ENCODE measurements at regions of chr14 and their contacts with region 1.

Region 1: DNA sequence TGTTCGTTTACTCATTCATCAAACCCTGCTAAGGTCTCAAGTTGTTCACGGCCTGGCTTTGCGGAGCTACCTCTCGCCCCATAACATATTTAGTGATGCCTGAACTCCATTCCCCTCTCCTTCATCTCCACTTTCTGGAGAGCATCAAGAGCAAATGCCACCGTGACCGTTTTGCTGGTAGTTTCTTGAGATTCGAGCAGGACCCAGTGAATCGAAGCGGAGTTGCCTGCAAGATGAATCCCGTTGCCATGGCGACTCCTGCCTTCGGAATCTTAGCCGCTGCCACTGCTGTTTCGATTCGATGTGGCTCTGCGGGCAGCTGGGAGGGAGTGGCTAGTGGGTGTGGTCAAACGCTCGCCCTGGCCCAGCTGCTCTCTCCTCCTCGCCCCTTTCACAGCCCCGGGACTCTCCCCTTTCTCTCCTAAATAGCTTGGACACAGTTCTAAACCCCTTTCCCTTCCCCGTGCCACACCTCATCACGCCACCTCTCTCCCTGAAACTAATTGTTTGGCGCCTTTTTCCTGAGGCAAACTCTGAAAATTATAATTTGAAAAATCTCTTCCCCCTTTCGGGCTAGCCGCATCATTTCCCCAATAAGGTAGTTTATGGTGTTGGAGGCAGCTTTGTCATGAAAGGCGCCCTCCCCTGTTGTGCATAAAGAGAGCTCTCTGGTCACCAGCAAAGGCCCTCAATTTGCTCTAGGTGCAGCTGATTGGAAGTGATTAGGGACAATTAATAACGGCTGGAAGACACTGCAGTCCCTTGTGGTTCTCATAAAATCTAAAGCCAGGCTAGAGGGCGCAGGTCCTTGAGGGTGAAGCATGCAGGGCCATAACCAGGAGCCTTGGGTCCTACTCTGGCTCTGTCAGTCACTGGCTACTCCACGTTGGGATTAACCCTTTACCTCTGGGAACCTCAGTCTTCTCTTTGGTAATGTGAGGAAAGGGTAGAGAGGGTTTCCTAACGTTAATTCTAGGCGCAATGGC is 1.6 kb downstream of the DAAM1 start:
- DNase-seq: peak; percentile 78 to 79
- H3K4me3 ChIP-seq: peak overlapping the region; percentile 90
- H3K27ac ChIP-seq: no peak overlapping the region
- H3K4me1 ChIP-seq: peaks cover 29% of the 10 kb centered on the region
- H3K27me3 ChIP-seq: no peaks in the 10 kb centered on the region
- CTCF ChIP-seq: no peak; the same call in 1 of the 2 replicates

Region 2: DNA sequence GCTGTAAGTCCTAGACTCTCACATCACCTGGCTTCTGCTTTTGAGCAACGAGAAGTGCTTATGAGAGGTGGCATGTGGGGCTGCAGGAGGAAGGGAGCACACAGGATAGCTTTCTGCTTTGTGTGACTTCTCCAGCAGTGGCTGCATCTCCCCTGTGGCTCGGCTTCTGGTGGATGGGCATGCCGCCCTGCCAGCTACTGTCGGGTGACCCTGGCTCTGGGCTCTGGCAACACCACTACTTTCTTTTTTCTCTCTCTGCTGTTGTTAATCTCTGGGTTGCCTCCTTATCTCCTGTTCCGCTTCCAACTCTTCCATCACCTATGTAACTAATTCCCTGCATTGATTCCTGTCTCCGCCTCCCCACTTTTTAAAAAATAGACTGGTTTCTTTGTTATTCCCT is 210.8 kb before region 1 on chr14:
- CTCF ChIA-PET with region 1: no interaction called
- POLR2A ChIA-PET with region 1: no interaction called
- intact Hi-C with region 1: no loop called
- DNase-seq: no peak
- H3K4me3 ChIP-seq: no peak overlapping the region
- H3K27ac ChIP-seq: no peak overlapping the region
- H3K4me1 ChIP-seq: no peaks in the 10 kb centered on the region
- H3K27me3 ChIP-seq: peaks cover 6% of the 10 kb centered on the region; the same call in 1 of the 2 replicates
- CTCF ChIP-seq: no peak

Region 3: GRCh38 chr14:59360923-59361794 is 171.1 kb after region 1 on chr14:
- CTCF ChIA-PET with region 1: no interaction called
- POLR2A ChIA-PET with region 1: no interaction called
- intact Hi-C with region 1: loop called (anchors 1 kb)
- DNase-seq: peak; percentile 88 to 99
- H3K4me3 ChIP-seq: peak overlapping the region; percentile 33; the same call in 1 of the 2 replicates
- H3K27ac ChIP-seq: peak overlapping the region; percentile 86
- H3K4me1 ChIP-seq: peaks cover 100% of the 10 kb centered on the region
- H3K27me3 ChIP-seq: no peaks in the 10 kb centered on the region
- CTCF ChIP-seq: no peak

Region 4: GRCh38 chr14:59377991-59378601 is 188.0 kb after region 1 on chr14:
- CTCF ChIA-PET with region 1: no interaction called
- POLR2A ChIA-PET with region 1: no interaction called
- intact Hi-C with region 1: no loop called
- DNase-seq: no peak
- H3K4me3 ChIP-seq: no peak overlapping the region
- H3K27ac ChIP-seq: no peak overlapping the region
- H3K4me1 ChIP-seq: no peaks in the 10 kb centered on the region
- H3K27me3 ChIP-seq: no peaks in the 10 kb centered on the region
- CTCF ChIP-seq: no peak

Region 5: DNA sequence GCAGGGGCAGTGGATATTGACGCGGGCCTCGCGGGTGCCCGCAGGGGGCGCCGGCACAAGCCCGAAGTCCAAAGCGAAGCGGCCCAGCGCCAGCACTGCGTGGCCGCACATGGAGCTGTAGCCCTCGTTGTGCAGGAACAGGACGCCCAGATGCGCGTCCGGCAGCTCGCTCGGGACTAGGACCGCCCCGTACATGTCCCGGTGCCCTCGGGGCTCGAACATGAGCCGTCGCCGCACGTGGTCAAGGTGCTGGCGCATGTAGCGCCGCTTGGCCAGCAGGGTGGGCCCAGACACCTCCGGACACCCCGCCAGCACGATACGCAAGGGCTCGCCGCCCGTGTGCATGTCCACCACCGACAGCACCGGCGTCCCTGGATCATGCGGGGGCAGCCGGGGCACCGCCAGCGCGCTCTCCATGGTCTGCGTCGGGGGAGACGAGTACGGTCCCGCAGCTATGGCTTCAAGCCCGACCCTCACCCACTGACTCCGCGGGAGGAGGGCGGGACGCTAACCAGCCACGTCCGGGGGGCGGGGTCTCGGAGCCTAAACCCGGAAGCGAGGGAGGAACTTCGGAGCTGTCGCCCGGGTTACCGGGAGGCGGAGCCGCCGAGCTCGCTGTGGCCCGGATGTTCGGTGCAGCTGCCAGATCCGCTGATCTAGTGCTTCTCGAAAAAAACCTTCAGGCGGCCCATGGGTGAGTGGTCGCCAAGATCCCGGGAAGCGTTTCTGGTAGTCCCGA is 294.0 kb after region 1 on chr14 and contains the starts of genes JKAMP and L3HYPDH:
- CTCF ChIA-PET with region 1: no interaction called
- POLR2A ChIA-PET with region 1: interaction called, 3 read pairs
- intact Hi-C with region 1: loop called (anchors 2 kb)
- DNase-seq: peak; percentile 89 to 96
- H3K4me3 ChIP-seq: peak within 1 kb of the TSS; percentile 99
- H3K27ac ChIP-seq: peak within 1 kb of the TSS; percentile 96
- H3K4me1 ChIP-seq: peaks cover 46% of the 10 kb centered on the region
- H3K27me3 ChIP-seq: no peaks in the 10 kb centered on the region
- CTCF ChIP-seq: peak; percentile 50
- total RNA-seq, gene JKAMP: 54.6 and 60.1 TPM in 2 replicates
- total RNA-seq, gene L3HYPDH: 96.3 and 121 TPM in 2 replicates

Region 6: DNA sequence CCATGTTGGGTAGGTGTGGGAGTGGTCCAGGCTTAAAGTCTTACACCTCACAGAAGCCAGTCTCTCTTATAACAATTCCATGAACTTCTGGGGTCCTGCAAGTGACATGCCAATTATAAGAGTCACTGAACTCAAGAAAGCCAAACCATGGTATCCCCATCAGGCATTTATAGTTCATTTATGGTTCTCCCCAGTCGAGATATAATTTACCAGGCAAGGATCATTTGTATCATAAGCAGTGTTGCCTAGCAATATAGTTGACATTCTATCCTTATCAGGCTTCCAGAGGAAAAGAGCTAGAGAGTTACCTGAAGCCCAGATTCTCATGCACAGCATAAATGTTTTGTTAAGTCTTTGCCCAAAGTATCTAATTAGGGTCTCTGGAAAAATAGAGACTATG is 302.3 kb after region 1 on chr14:
- CTCF ChIA-PET with region 1: no interaction called
- POLR2A ChIA-PET with region 1: interaction called, 19 read pairs
- intact Hi-C with region 1: no loop called
- DNase-seq: no peak
- H3K4me3 ChIP-seq: no peak overlapping the region
- H3K27ac ChIP-seq: no peak overlapping the region
- H3K4me1 ChIP-seq: no peaks in the 10 kb centered on the region
- H3K27me3 ChIP-seq: no peaks in the 10 kb centered on the region
- CTCF ChIP-seq: no peak

Region 7: DNA sequence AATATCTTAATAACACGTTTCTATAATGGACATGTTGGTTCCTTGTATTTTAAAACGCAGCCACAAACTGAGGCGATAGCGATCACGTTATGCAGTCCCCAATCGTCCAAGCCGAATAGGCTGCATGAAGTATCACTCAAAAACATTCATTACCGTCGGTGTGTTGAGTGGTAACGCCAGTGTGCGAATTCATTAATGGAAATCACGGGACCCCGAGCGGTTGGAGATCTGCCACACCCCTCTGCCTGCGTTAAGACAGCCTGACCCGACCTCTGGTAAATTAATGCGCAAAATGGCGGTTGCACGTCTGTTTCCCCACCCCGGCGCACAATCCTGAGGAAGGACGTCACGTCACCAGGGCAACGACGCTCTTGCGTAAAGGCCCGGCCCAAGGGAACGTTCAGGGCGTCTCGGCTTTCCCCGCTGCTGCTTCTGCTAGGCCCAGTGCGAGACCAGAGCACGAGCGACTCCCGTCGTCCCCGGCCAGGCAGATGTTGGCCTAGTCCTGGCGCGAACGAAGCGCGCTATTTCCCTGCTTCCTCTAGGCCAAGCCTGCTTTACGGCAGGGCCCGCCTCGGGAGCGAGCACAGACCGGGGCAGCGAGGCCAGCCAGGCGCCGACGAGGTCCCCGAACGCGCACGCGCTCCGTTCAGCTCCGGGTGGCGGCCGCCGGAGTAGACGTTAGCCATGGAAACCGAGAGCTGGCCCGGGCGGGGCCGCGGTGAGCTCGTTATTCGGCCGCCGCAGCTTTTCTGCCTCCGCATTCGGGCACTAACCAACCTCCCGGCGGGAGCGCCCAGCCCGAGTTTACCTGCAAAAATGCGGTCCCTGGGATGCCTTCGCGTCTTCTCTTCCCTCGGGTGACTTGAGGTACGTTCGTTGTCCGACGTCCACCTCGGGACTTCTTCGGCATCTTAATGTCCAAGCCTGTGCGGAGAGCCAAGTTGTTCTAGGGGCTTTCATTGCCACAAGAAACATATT is 901.8 kb after region 1 on chr14 and contains the start of gene PCNX4:
- CTCF ChIA-PET with region 1: no interaction called
- POLR2A ChIA-PET with region 1: no interaction called
- intact Hi-C with region 1: loop called (anchors 5 kb)
- DNase-seq: peak; percentile 96
- H3K4me3 ChIP-seq: peak within 1 kb of the TSS; percentile 90
- H3K27ac ChIP-seq: peak within 1 kb of the TSS; percentile 94
- H3K4me1 ChIP-seq: peaks cover 20% of the 10 kb centered on the region
- H3K27me3 ChIP-seq: no peaks in the 10 kb centered on the region
- CTCF ChIP-seq: no peak
- total RNA-seq, gene PCNX4: 58.3 and 65.1 TPM in 2 replicates